Caco-2 (cell line): ENCODE measurements at regions of chr17 and their contacts with region 1.

Region 1: GRCh38 chr17:41322094-41322902 is 6.8 kb upstream of the KRTAP17-1 start:
- DNase-seq: peak in 1 of 2 experiments; percentile 35
- H3K4me3 ChIP-seq: no peak overlapping the region
- H3K4me3 Mint-ChIP-seq: no peak overlapping the region
- H3K27ac Mint-ChIP-seq: peak overlapping the region; percentile 76
- H3K4me1 ChIP-seq: peaks cover 4% of the 10 kb centered on the region; the same call in 1 of the 2 replicates
- H3K4me1 Mint-ChIP-seq: peaks cover 10% of the 10 kb centered on the region
- H3K27me3 ChIP-seq: no peaks in the 10 kb centered on the region
- H3K27me3 Mint-ChIP-seq: no peaks in the 10 kb centered on the region
- CTCF ChIP-seq: peak; percentile 75 to 86

Region 2: GRCh38 chr17:40803617-40804082 is 518.6 kb before region 1 on chr17:
- CTCF ChIA-PET with region 1: interaction called, 3 read pairs
- POLR2A ChIA-PET with region 1: no interaction called
- intact Hi-C with region 1: loop called (anchors 5 kb)
- DNase-seq: peak; percentile 87 to 91
- H3K4me3 ChIP-seq: no peak overlapping the region
- H3K4me3 Mint-ChIP-seq: no peak overlapping the region
- H3K27ac Mint-ChIP-seq: no peak overlapping the region
- H3K4me1 ChIP-seq: 0 out of 2 replicates have a peak, but pooled peaks cover 5% of the 10 kb centered on the region
- H3K4me1 Mint-ChIP-seq: no peaks in the 10 kb centered on the region
- H3K27me3 ChIP-seq: no peaks in the 10 kb centered on the region
- H3K27me3 Mint-ChIP-seq: peaks cover 4% of the 10 kb centered on the region
- CTCF ChIP-seq: peak; percentile 96

Region 3: GRCh38 chr17:40854159-40854814 is 468.0 kb before region 1 on chr17:
- CTCF ChIA-PET with region 1: interaction called, 13 read pairs
- POLR2A ChIA-PET with region 1: no interaction called
- intact Hi-C with region 1: loop called (anchors 5 kb)
- DNase-seq: no peak
- H3K4me3 ChIP-seq: no peak overlapping the region
- H3K4me3 Mint-ChIP-seq: no peak overlapping the region
- H3K27ac Mint-ChIP-seq: no peak overlapping the region
- H3K4me1 ChIP-seq: peaks cover 13% of the 10 kb centered on the region
- H3K4me1 Mint-ChIP-seq: peaks cover 19% of the 10 kb centered on the region
- H3K27me3 ChIP-seq: no peaks in the 10 kb centered on the region
- H3K27me3 Mint-ChIP-seq: no peaks in the 10 kb centered on the region
- CTCF ChIP-seq: no peak

Region 4: DNA sequence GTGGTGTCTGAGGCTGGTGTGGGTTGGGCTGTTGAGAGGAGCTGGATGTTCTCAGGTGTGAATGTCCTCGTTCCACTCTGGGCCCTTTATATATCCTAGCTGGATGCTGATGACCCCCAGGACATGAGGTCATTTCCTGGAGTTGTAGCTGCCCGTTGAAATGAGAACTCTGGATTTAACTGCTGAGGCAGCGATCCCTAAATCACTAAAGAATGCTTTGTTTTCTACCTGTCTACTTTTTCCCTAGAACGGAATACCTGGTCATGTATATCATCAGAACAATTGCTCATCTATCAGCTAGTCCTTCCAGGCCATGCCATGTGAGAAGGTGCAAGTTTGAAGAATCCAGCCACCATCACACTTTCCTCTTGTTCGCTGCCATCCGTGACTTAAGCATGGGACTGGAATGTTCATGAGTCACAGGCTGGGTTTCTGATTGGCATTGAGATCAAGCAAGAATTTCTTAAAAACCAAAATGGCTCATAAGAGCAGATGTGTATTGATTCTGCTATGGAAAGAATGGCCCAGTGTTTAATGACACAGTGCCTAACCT is 262.2 kb before region 1 on chr17 and contains the start of gene KRTAP2-3:
- CTCF ChIA-PET with region 1: no interaction called
- POLR2A ChIA-PET with region 1: no interaction called
- intact Hi-C with region 1: loop called (anchors 10 kb)
- DNase-seq: peak in 1 of 2 experiments; percentile 24
- H3K4me3 ChIP-seq: peak within 1 kb of the TSS; percentile 22; the same call in 1 of the 2 replicates
- H3K4me3 Mint-ChIP-seq: peak within 1 kb of the TSS; percentile 68
- H3K27ac Mint-ChIP-seq: peak within 1 kb of the TSS; percentile 76
- H3K4me1 ChIP-seq: peaks cover 49% of the 10 kb centered on the region
- H3K4me1 Mint-ChIP-seq: peaks cover 45% of the 10 kb centered on the region
- H3K27me3 ChIP-seq: no peaks in the 10 kb centered on the region
- H3K27me3 Mint-ChIP-seq: no peaks in the 10 kb centered on the region
- CTCF ChIP-seq: no peak
- total RNA-seq, gene KRTAP2-3: 3.7 and 4.9 TPM in 2 replicates

Region 5: DNA sequence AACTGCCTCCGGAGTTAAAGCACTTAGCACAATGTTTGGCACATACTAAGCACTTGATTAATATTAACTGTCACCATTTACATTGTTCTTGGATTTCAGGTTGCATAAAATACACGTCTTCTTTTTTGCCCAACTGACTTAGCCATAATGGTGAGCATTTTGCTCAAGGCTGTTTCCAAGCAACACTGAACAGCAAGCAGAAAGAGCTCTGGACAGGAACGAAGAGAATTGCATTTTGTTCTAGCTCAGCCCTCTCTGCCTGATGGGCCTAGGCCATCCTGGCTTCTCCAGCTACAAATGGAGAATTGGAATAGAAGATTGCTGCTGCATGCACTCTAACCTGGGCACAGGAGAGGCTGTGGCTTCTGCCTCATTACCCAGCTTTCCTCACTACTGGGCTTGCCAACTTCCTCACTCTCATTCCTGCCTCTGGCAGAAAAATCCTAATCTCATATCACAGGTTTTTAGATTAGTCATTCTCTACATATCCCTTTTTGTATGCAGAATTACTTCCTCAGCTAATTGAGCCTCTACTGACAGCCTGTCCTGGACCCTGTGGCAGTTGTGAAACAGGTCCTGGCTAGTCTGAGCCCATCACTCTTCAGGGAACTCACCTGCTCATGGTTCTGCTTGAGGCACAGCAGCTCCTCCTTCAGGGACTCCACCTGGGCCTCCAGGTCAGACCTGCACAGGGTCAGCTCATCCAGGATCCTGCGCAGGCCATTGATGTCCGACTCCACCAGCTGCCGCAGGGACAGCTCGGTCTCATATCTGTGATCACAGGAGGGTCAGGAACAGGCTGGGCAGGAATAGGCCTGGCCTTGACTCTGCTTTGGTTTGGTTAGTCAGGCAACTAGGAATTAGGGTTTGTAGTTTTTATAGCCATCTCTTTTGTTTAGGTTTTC is 25.8 kb after region 1 on chr17:
- CTCF ChIA-PET with region 1: no interaction called
- POLR2A ChIA-PET with region 1: no interaction called
- intact Hi-C with region 1: no loop called
- DNase-seq: no peak
- H3K4me3 ChIP-seq: no peak overlapping the region
- H3K4me3 Mint-ChIP-seq: no peak overlapping the region
- H3K27ac Mint-ChIP-seq: no peak overlapping the region
- H3K4me1 ChIP-seq: no peaks in the 10 kb centered on the region
- H3K4me1 Mint-ChIP-seq: no peaks in the 10 kb centered on the region
- H3K27me3 ChIP-seq: no peaks in the 10 kb centered on the region
- H3K27me3 Mint-ChIP-seq: no peaks in the 10 kb centered on the region
- CTCF ChIP-seq: no peak

Region 6: GRCh38 chr17:41367426-41368075 is 45.3 kb after region 1 on chr17:
- CTCF ChIA-PET with region 1: no interaction called
- POLR2A ChIA-PET with region 1: no interaction called
- intact Hi-C with region 1: no loop called
- DNase-seq: no peak
- H3K4me3 ChIP-seq: no peak overlapping the region
- H3K4me3 Mint-ChIP-seq: no peak overlapping the region
- H3K27ac Mint-ChIP-seq: no peak overlapping the region
- H3K4me1 ChIP-seq: no peaks in the 10 kb centered on the region
- H3K4me1 Mint-ChIP-seq: no peaks in the 10 kb centered on the region
- H3K27me3 ChIP-seq: no peaks in the 10 kb centered on the region
- H3K27me3 Mint-ChIP-seq: no peaks in the 10 kb centered on the region
- CTCF ChIP-seq: no peak

Region 7: DNA sequence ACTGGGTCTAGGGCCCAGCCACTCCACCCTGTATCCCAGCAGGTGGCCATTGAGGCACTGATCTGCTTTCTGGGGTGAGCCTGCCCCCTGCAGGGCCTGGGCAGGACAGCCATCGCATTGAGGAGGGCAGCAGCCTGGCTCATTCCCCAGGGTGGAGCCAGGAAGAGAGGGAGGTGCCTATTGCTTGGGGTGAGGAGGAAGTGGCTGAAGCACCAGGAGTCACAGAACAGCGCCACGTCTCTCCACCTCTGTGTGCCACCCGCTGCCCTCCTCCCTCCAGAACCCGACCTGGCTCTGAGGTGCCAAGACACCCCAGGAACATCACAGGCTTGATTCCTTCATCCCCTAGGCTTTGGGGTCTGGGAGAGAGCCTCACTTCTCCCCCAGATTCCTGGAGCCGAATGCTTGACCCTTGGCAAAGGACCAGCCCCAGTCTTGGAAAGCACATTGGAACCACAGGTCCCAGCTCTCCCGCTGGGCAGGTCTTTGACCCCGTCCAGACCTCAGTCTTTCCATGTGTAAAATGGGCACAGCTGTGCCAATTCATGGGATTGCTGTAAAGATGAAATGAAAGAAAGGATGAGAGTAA is 174.6 kb after region 1 on chr17:
- CTCF ChIA-PET with region 1: no interaction called
- POLR2A ChIA-PET with region 1: no interaction called
- intact Hi-C with region 1: loop called (anchors 10 kb)
- DNase-seq: peak; percentile 76 to 79
- H3K4me3 ChIP-seq: no peak overlapping the region
- H3K4me3 Mint-ChIP-seq: no peak overlapping the region
- H3K27ac Mint-ChIP-seq: no peak overlapping the region
- H3K4me1 ChIP-seq: no peaks in the 10 kb centered on the region; the same call in 1 of the 2 replicates
- H3K4me1 Mint-ChIP-seq: peaks cover 6% of the 10 kb centered on the region
- H3K27me3 ChIP-seq: no peaks in the 10 kb centered on the region
- H3K27me3 Mint-ChIP-seq: no peaks in the 10 kb centered on the region
- CTCF ChIP-seq: peak; percentile 61 to 64